Activated CD8-positive, alpha-beta T cell treated with anti-CD3 and anti-CD28 coated beads for 36 hours (primary cell): ENCODE measurements at regions of chr10 and their contacts with region 1.

Region 1: DNA sequence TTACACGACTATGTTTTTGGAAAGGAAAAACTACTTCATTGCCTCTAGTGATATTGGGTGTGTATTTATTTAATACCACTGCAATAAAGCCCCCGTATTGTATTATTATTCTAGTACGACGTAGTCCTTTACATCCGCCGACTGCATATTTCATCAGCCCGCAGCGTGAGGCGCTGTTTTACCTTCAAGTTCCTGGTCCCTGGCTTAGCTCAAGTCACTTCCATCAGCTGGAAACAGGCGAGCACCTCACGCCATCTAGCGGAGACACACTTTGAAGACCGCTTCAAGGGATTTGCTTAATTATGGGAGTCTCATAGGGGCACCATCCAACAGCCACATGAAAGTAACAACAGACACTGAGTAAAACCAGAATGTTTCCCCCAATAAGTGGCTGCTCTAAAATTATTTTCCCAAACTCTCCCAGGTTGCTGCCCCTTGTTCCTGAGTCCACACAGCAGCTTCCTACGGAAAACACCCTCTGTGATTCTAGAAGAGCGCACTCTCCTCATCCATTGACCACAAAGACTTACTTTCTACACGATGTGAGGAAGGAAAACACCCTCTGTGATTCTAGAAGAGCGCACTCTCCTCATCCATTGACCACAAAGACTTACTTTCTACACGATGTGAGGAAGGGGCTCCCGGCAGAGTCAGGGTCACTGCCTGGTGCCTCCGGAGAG is 15.7 kb upstream of the ITIH2 start:
- DNase-seq: peak; percentile 92
- ATAC-seq: peak; percentile 94
- H3K4me3 Mint-ChIP-seq: no peak overlapping the region
- H3K27ac Mint-ChIP-seq: peak overlapping the region; percentile 9
- H3K4me1 Mint-ChIP-seq: peaks cover 11% of the 10 kb centered on the region
- H3K27me3 Mint-ChIP-seq: no peaks in the 10 kb centered on the region
- CTCF ChIP-seq: peak; percentile 95

Region 2: DNA sequence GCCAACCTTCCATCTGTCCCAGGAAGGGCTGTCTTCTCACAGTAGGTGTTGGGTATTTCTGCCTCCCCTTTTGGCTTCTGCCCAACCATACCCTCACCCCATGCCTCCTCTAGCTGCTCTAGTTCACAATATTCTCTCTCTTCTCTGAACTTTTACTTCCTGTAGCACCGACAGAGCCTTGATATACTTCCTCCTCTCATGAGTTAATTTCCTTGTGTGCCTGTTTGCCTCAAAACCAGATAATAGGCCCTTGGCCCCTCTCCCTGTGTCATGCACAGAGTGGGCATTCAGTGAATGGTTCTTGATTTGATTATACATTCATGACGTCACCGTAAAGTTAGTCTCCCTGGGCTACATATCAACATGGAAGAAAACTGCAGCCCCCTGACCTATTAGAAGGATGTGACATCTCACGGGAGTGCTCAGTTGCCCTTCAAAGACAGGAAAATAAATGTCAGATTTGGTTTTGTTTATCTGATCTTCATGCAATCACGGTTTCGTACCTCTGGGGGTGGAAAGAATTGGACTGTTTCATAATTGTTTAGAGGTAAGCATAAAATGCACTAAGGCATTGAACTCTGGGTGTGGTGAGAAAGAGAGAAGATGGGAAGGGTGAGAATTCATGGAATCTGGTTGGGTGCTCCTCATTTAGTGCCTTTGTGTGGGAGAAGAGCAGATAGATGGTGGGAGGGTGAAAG is 148.2 kb before region 1 on chr10:
- CTCF ChIA-PET with region 1: interaction called, 11 read pairs
- POLR2A ChIA-PET with region 1: no interaction called
- intact Hi-C with region 1: no loop called
- DNase-seq: peak; percentile 57
- ATAC-seq: peak; percentile 94
- H3K4me3 Mint-ChIP-seq: peak overlapping the region; percentile 4
- H3K27ac Mint-ChIP-seq: peak overlapping the region; percentile 89
- H3K4me1 Mint-ChIP-seq: peaks cover 16% of the 10 kb centered on the region
- H3K27me3 Mint-ChIP-seq: no peaks in the 10 kb centered on the region
- CTCF ChIP-seq: no peak

Region 3: DNA sequence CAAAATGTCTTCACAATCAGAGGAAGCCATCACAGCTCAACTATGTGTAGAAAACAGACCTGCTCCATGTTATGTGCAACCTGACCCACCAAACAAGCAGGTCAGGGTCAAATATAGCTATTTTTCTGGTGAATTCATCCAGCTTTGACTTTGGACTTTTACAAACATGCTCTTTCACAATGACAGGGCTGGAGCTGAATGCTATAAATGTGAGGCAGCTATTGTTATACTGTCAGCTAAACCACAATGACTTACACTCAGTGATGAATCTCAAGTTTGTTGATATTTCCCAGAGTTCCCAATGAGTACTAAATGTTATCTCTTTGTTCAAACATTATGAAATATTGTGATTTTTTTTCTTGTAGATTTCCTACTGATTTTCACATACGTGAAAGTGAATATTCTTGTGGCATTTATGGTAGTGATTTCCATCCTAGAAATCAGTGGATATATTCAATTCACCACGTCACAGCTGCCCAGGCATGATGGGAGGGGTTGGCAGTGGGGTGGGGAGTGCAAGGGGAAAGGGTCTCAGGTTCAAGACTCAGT is 13.3 kb after region 1 on chr10:
- CTCF ChIA-PET with region 1: interaction called, 22 read pairs
- POLR2A ChIA-PET with region 1: no interaction called
- intact Hi-C with region 1: no loop called
- DNase-seq: no peak
- ATAC-seq: no peak
- H3K4me3 Mint-ChIP-seq: no peak overlapping the region
- H3K27ac Mint-ChIP-seq: no peak overlapping the region
- H3K4me1 Mint-ChIP-seq: no peaks in the 10 kb centered on the region
- H3K27me3 Mint-ChIP-seq: peaks cover 23% of the 10 kb centered on the region
- CTCF ChIP-seq: no peak

Region 4: DNA sequence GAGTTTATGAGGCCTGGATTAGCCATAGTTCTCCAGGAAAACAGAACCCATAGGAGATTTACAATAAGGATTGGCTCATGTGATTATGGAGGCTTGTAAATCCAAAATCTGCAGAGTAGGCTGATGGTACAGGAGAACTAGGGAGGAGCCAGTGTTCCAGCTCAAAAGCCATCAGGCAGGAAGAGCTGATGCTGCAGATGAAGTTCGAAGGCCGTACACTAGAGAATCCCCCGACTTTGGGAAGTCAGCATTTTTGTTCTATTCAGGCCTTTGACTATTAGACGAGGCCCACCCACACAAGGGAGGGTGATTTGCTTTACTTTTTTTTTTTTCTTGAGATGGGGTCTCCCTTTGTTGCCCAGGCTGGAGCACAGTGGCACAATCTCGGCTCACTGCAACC is 62.9 kb after region 1 on chr10:
- CTCF ChIA-PET with region 1: no interaction called
- POLR2A ChIA-PET with region 1: no interaction called
- intact Hi-C with region 1: no loop called
- DNase-seq: no peak
- ATAC-seq: no peak
- H3K4me3 Mint-ChIP-seq: no peak overlapping the region
- H3K27ac Mint-ChIP-seq: no peak overlapping the region
- H3K4me1 Mint-ChIP-seq: no peaks in the 10 kb centered on the region
- H3K27me3 Mint-ChIP-seq: no peaks in the 10 kb centered on the region
- CTCF ChIP-seq: no peak